GM12878 (cell line): ENCODE measurements at regions of chr3 and their contacts with region 1.

Region 1: GRCh38 chr3:102038477-102039142 is 189.3 kb downstream of the NFKBIZ start:
- DNase-seq: peak; percentile 94
- ATAC-seq: peak; percentile 88
- H3K4me3 ChIP-seq: no peak overlapping the region
- H3K27ac ChIP-seq: peak overlapping the region; percentile 74
- H3K4me1 ChIP-seq: peaks cover 51% of the 10 kb centered on the region
- H3K27me3 ChIP-seq: no peaks in the 10 kb centered on the region
- CTCF ChIP-seq: no peak
- EP300 ChIP-seq: peak; percentile 87 to 94
- POLR2A ChIP-seq: no peak
- RAD21 ChIP-seq: no peak

Region 2: DNA sequence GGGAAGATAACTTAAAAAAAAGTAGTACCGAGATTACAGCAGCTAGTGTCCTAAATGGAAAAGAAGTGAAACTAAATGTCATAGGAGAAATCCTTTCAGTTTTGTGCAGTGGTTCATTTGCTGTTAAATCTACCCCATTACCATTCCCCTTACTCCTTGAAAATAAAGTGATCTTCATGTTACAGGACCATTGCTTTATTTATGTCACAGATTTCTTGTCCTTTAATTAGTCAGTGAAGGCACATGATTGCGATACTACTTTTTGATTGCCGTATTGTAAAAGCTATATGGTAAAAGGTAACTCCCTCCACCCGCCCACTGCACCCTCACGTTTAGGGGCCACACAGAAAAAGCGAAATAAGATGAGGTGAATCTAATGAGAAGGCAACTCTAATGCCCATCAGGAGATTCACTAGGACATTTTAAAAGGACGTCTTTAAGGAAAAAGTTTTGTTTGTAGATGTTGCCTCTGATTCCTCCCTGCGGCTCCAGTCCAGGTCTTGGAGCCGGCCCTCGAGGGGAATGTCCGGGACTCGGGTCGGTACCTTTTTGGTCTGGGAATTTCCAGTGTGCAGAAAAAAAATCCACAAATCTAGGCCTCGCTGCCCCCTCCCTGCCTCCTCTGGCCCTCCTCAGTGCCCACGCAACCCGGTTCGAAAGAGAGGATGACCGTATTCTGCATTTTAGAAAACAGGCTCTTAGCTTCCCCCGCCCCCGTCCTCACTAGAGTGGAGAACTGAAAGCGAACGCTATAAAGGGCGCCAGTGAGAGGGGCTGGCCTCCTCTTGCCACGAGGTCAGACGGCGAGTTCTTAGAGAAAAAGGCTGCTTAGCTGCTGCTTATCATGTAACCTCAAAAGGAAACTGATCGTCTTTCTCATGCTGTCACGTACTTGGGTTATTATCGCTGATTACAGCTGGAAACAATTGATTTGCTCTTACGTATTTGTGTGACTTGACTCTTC is 211.1 kb before region 1 on chr3:
- CTCF ChIA-PET with region 1: interaction called, 5 read pairs
- POLR2A ChIA-PET with region 1: interaction called, 4 read pairs
- RAD21 ChIA-PET with region 1: interaction called, 42 read pairs
- SMC1A ChIA-PET with region 1: interaction called, 18 read pairs
- in situ Hi-C with region 1: no loop called
- intact Hi-C with region 1: no loop called
- DNase-seq: peak; percentile 93
- ATAC-seq: peak; percentile 83
- H3K4me3 ChIP-seq: peak overlapping the region; percentile 78
- H3K27ac ChIP-seq: peak overlapping the region; percentile 92
- H3K4me1 ChIP-seq: peaks cover 11% of the 10 kb centered on the region
- H3K27me3 ChIP-seq: no peaks in the 10 kb centered on the region
- CTCF ChIP-seq: no peak
- EP300 ChIP-seq: peak; percentile 36 to 84
- POLR2A ChIP-seq: peak; percentile 92
- RAD21 ChIP-seq: peak; percentile 38; the same call in 1 of the 2 replicates

Region 3: GRCh38 chr3:101936419-101937356 is 101.9 kb before region 1 on chr3:
- CTCF ChIA-PET with region 1: interaction called, 4 read pairs
- POLR2A ChIA-PET with region 1: interaction called, 6 read pairs
- RAD21 ChIA-PET with region 1: interaction called, 64 read pairs
- SMC1A ChIA-PET with region 1: interaction called, 19 read pairs
- in situ Hi-C with region 1: no loop called
- intact Hi-C with region 1: loop called (anchors 5 kb)
- DNase-seq: peak; percentile 95
- ATAC-seq: peak; percentile 82
- H3K4me3 ChIP-seq: peak overlapping the region; percentile 44; the same call in 1 of the 2 replicates
- H3K27ac ChIP-seq: peak overlapping the region; percentile 56
- H3K4me1 ChIP-seq: peaks cover 53% of the 10 kb centered on the region
- H3K27me3 ChIP-seq: no peaks in the 10 kb centered on the region
- CTCF ChIP-seq: no peak
- EP300 ChIP-seq: peak; percentile 91 to 94
- POLR2A ChIP-seq: no peak
- RAD21 ChIP-seq: peak; percentile 17; the same call in 1 of the 2 replicates

Region 4: GRCh38 chr3:101976473-101976872 is 62.1 kb before region 1 on chr3:
- CTCF ChIA-PET with region 1: interaction called, 7 read pairs
- POLR2A ChIA-PET with region 1: interaction called, 8 read pairs
- RAD21 ChIA-PET with region 1: interaction called, 17 read pairs
- SMC1A ChIA-PET with region 1: interaction called, 4 read pairs
- in situ Hi-C with region 1: no loop called
- intact Hi-C with region 1: no loop called
- DNase-seq: peak; percentile 74
- ATAC-seq: peak; percentile 96
- H3K4me3 ChIP-seq: no peak overlapping the region
- H3K27ac ChIP-seq: peak overlapping the region; percentile 4; the same call in 1 of the 2 replicates
- H3K4me1 ChIP-seq: peaks cover 14% of the 10 kb centered on the region; the same call in 1 of the 2 replicates
- H3K27me3 ChIP-seq: no peaks in the 10 kb centered on the region
- CTCF ChIP-seq: no peak
- EP300 ChIP-seq: peak; percentile 14 to 66; a peak in 3 of 4 replicates
- POLR2A ChIP-seq: no peak
- RAD21 ChIP-seq: no peak

Region 5: GRCh38 chr3:102006812-102007485 is 31.7 kb before region 1 on chr3:
- CTCF ChIA-PET with region 1: interaction called, 3 read pairs
- POLR2A ChIA-PET with region 1: no interaction called
- RAD21 ChIA-PET with region 1: interaction called, 4 read pairs
- SMC1A ChIA-PET with region 1: interaction called, 11 read pairs
- in situ Hi-C with region 1: no loop called
- intact Hi-C with region 1: no loop called
- DNase-seq: no peak
- ATAC-seq: peak; percentile 49
- H3K4me3 ChIP-seq: no peak overlapping the region
- H3K27ac ChIP-seq: no peak overlapping the region
- H3K4me1 ChIP-seq: no peaks in the 10 kb centered on the region
- H3K27me3 ChIP-seq: no peaks in the 10 kb centered on the region
- CTCF ChIP-seq: no peak
- EP300 ChIP-seq: 0 out of 4 replicates have a peak, but pooled peaks of 1 of the 2 experiments have one; percentile 13
- POLR2A ChIP-seq: no peak
- RAD21 ChIP-seq: no peak

Region 6: GRCh38 chr3:102085431-102086176 is 47.0 kb after region 1 on chr3:
- CTCF ChIA-PET with region 1: no interaction called
- POLR2A ChIA-PET with region 1: no interaction called
- RAD21 ChIA-PET with region 1: interaction called, 12 read pairs
- SMC1A ChIA-PET with region 1: interaction called, 10 read pairs
- in situ Hi-C with region 1: no loop called
- intact Hi-C with region 1: no loop called
- DNase-seq: no peak
- ATAC-seq: peak; percentile 38
- H3K4me3 ChIP-seq: no peak overlapping the region
- H3K27ac ChIP-seq: no peak overlapping the region
- H3K4me1 ChIP-seq: no peaks in the 10 kb centered on the region
- H3K27me3 ChIP-seq: no peaks in the 10 kb centered on the region
- CTCF ChIP-seq: no peak
- EP300 ChIP-seq: no peak
- POLR2A ChIP-seq: no peak
- RAD21 ChIP-seq: no peak